OCI-LY7 (cell line): ENCODE measurements at regions of chr6 and their contacts with region 1.

Region 1: DNA sequence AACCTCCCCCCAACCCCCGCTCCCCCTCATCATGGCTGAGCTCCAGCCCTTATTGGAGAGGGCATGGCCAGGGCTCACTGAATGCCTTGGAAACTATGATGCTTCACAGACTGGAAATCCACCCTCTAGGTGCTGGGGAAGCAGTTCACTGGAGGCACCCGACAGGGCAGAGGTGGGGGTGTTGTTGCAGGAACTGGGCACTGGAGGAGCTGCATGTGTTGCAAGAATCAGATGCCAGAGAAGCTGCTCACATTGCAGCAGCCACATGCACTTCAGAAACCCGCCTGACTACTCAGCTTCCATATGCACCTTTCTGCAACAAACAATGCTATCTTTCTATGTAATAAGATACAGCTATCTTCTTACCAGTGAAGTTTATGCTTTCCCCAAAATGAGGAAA is 7.9 kb upstream of the TBPL1 start:
- DNase-seq: no peak
- H3K4me3 ChIP-seq: no peak overlapping the region
- H3K27ac ChIP-seq: no peak overlapping the region
- H3K4me1 ChIP-seq: no peaks in the 10 kb centered on the region
- CTCF ChIP-seq: no peak

Region 2: GRCh38 chr6:133891149-133891926 is 53.8 kb before region 1 on chr6:
- CTCF ChIA-PET with region 1: no interaction called
- POLR2A ChIA-PET with region 1: interaction called, 10 read pairs
- intact Hi-C with region 1: no loop called
- DNase-seq: no peak
- H3K4me3 ChIP-seq: no peak overlapping the region
- H3K27ac ChIP-seq: no peak overlapping the region
- H3K4me1 ChIP-seq: no peaks in the 10 kb centered on the region
- CTCF ChIP-seq: no peak